ENCODE measurements at regions of chr1 and their contacts with region 1.

Region 1: GRCh38 chr1:204363335-204364124 is 3.8 kb upstream of the PLEKHA6 start:
- DNase-seq: no peak
- H3K4me3 ChIP-seq: peak overlapping the region; percentile 50
- CTCF ChIP-seq: peak; percentile 92

Region 2: GRCh38 chr1:203861379-203862184 is 501.9 kb before region 1 on chr1 and contains the start of gene SNRPE:
- CTCF ChIA-PET with region 1: interaction called, 17 read pairs
- POLR2A ChIA-PET with region 1: no interaction called
- DNase-seq: peak; percentile 82
- H3K4me3 ChIP-seq: peak within 1 kb of the TSS; percentile 100
- CTCF ChIP-seq: peak; percentile 98

Region 3: GRCh38 chr1:204018463-204018862 is 345.1 kb before region 1 on chr1:
- CTCF ChIA-PET with region 1: no interaction called
- POLR2A ChIA-PET with region 1: no interaction called
- DNase-seq: no peak
- H3K4me3 ChIP-seq: no peak overlapping the region
- CTCF ChIP-seq: no peak

Region 4: DNA sequence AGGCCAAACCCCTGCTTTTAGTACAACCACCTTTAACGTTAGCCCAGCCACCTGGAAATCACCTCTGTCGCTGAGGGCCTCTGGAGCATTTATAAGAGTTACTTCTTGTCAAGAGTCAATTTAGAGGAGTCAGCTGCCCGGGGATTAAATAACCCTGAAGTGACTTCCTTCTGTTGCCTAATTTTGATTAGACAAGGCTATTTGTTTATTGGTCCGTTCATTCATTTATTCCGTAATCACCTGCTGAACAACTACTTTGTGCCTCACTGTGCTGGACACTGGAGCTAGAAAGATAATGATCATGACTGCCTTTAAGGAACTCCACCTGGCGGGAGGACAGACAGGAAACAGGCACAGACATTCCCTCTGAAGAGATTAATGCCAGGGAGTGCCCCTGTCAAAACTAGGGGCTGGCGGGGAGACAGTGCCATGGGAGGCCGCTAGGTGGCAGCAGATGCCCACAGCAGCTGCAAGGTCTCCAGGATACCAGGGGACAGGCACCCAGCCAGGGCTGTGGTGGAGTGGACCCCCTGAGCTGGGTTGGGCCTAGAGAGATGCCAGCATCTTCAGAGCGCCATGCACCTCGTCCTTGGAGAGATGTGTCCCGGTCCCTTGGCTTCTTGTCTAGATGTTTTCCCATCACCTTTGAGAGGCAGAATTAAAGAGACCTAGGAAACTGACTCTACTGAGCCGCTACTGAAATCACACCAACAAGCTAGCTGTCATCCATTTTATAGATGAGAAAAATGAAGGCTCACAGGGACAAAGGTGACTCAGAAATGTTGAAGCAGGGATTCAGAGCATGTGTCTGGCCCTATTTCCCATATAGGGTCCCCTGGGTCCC is 201.1 kb before region 1 on chr1:
- CTCF ChIA-PET with region 1: interaction called, 378 read pairs
- POLR2A ChIA-PET with region 1: no interaction called
- DNase-seq: peak; percentile 12
- H3K4me3 ChIP-seq: no peak overlapping the region
- CTCF ChIP-seq: peak; percentile 98

Region 5: DNA sequence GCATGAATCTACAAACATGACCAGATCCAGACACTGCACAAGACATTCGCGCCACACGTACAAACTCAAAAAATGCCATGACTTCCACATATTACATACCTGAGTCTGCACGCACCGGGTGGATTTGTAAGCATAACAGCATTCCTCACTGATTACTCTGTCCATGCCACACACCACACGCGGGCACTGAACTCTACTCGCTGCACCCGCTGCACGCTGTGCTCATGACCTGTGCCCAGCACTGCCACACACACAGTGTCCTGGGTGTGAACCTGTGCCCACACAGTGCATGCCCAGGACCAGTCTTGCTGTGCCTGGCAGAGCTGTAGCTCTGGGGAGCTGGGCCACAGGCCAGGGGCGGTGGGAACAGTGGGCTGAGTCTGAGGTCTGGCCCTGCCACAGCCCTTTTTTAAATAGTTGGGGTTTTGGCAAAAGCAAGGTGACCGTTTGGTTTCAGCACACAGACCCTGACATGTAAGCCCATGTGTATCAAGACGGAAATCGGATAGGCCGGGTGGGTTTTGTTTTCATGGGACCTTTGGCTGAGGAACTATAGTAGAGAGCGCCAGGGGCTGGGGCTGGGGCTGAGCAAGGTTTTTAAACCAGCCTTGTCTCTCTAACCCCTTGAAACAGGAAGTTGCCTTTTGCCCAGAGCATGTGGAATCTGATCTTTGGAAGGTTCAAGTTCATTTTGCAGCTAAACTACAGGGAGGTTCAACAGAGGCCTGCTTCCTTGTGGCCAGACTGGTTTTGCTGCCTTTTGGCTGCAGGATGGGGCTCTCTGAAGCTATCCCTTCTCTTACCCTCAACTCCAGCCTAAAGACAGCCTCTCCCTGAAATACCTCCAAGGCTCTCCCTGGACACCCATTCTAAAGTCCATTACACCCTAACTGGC is 137.4 kb before region 1 on chr1:
- CTCF ChIA-PET with region 1: interaction called, 30 read pairs
- POLR2A ChIA-PET with region 1: no interaction called
- DNase-seq: no peak
- H3K4me3 ChIP-seq: no peak overlapping the region
- CTCF ChIP-seq: no peak

Region 6: DNA sequence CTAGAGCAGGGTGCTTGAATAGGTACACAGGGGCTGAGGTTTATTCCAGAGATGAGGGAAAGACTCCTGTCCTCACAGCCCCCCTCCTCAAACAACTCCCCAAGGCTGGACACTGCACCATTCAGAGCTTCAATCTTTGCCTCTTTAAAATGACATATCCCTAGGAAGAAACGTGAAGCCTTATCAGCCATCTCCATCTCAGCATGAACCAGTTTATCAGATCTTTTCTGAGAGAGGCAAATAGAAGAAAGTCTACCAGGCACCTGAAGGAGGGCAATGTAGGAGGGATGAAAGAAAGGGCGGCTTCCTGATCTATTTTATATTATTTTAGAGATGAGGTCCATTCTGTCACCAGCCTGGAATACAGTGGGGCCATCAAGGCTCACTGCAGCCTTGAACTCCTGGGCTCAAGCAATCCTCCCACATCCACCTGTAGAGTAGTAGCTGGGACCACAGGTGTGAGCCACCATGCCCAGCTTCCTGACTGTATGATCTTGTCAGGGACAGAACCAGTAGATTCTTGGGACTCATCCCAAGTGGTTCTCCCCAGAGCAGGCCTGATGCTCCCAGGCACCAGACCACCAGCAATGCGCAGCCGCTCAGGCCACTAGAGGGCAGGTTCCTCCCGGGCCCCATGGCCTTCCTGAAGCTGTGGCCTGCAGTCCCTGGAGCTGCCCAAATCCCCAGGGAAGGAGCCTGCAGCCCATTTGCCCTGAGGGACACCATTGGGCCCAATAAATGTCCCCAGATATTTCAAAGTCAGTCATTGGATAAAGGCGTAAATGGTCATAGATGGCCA is 105.4 kb before region 1 on chr1:
- CTCF ChIA-PET with region 1: interaction called, 335 read pairs
- POLR2A ChIA-PET with region 1: no interaction called
- DNase-seq: no peak
- H3K4me3 ChIP-seq: no peak overlapping the region
- CTCF ChIP-seq: peak; percentile 86

Region 7: DNA sequence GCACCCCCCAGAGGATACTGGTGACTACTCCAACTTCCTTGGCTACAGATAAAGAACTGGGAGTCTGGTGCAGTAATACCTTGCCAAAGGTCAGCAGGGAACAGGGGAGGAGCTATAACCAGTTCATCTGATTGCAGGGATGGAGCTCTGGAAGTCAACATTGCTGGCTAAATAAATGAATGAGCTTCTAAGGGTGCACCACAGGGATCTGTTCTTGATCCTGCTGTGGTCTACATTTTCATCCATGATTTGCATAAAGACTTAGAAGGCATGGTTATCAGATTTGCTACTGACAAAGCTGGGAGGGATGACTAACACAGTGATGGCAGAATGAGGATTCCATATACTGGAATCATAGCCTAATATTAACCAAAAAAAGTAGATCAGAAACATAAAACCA is 22.1 kb before region 1 on chr1:
- CTCF ChIA-PET with region 1: interaction called, 33 read pairs
- POLR2A ChIA-PET with region 1: no interaction called
- DNase-seq: peak; percentile 33
- H3K4me3 ChIP-seq: no peak overlapping the region
- CTCF ChIP-seq: no peak

Region 8: DNA sequence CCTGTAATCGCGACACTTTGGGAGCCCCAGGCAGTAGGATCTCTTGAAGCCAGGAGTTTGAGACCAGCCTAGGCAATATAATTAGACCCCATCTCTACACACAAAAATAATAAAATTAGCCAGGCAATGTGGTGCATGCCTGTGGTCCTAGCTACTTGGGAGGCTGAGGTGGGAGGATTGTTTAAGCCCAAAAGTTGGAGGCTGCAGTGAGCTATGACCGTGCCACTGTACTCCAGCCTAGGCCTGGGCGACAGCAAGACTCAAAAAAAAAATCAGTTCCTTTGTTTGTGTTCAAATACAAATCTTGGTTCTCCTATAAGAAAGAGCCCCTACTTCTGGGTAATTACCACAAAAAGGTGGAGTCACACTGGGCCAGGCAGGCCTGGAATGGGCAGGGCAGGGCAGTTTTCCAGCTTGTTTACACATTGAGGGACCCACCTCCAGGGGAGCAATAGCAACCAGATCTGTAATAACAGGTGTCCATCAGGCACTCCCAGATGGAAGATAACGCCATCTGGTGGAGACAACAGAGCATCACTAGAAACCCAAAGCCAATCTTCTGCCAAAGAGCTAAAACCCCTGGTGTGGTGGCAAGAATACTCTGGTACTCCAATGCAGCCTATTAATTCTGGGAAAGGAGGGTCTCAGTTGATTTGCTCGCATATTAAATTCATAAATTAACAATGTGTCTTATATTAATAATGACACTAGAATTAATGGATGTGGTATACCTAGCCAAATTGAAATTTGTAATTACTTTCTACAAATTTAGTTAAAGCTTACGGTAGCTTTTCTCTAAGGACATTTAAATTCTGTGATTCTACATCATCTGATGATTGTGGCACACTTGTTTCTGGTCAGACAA is 34.9 kb after region 1 on chr1:
- CTCF ChIA-PET with region 1: interaction called, 31 read pairs
- POLR2A ChIA-PET with region 1: no interaction called
- DNase-seq: no peak
- H3K4me3 ChIP-seq: no peak overlapping the region
- CTCF ChIP-seq: peak; percentile 74

Region 9: GRCh38 chr1:204426029-204426436 is 62.5 kb after region 1 on chr1:
- CTCF ChIA-PET with region 1: no interaction called
- POLR2A ChIA-PET with region 1: no interaction called
- DNase-seq: no peak
- H3K4me3 ChIP-seq: no peak overlapping the region
- CTCF ChIP-seq: no peak

Region 10: DNA sequence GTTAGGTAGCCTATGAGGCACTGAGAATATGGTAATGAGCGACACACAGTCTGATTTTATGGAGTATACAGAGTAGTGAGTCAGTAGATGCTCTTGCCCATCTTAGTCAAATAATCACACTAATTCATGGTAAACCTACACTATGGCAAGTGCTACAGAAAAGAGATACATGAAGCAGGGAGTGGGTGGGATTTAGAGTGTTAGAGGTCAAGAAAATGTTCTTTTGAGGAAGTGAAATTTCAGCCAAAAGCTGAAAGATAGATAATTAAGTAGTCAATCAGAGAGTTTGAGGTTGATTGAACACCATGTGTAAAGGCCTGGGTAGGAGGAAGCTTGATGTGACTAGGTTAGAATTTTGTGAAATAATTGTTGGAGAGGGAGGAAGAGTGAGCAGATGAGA is 167.4 kb after region 1 on chr1:
- CTCF ChIA-PET with region 1: no interaction called
- POLR2A ChIA-PET with region 1: no interaction called
- DNase-seq: no peak
- H3K4me3 ChIP-seq: no peak overlapping the region
- CTCF ChIP-seq: no peak

Region 11: GRCh38 chr1:204633665-204634064 is 270.1 kb after region 1 on chr1:
- CTCF ChIA-PET with region 1: no interaction called
- POLR2A ChIA-PET with region 1: no interaction called
- DNase-seq: no peak
- H3K4me3 ChIP-seq: no peak overlapping the region
- CTCF ChIP-seq: no peak

Measured in AG04449 (cell line).